Pancreas (tissue), 10 donors: ENCODE measurements at regions of chr12 and their contacts with region 1.

Region 1: GRCh38 chr12:5442251-5443006 is 10.5 kb downstream of the NTF3 start:
- DNase-seq: peak in 2 of 6 donors; percentile 13 to 18
- ATAC-seq: peak; percentile 58 to 86 (median 80)
- H3K4me3 ChIP-seq: no peak overlapping the region
- H3K27ac ChIP-seq: no peak overlapping the region
- H3K4me1 ChIP-seq: no peaks in the 10 kb centered on the region
- H3K27me3 ChIP-seq: no peaks in the 10 kb centered on the region
- CTCF ChIP-seq: peak in 1 of 4 donors; percentile 33

Region 2: DNA sequence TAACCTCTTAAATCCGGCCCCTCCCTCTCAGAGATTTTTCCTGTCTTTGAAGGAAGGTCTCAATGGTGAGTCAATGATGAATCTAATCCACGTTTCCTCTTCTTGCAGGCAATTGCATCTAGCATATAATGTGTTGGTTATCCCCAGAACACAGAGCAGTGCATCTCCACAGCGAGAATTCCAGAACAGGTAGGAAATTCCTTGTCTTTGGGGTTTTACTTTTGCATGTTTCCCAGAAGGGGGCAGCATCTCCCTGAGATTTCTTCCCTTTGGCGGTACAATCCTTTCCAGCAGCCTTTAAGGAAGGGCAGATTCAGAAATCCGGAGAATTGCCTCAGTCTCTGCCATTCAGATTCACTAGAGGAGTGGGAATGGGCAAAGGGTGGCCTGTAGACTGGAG is 270.7 kb before region 1 on chr12:
- intact Hi-C with region 1: loop called in 1 of 3 experiments (anchors 10 kb)
- DNase-seq: peak in 2 of 6 donors; percentile 6 to 22
- ATAC-seq: peak in 3 of 4 donors; percentile 38 to 61 (median 54)
- H3K4me3 ChIP-seq: no peak overlapping the region
- H3K27ac ChIP-seq: no peak overlapping the region
- H3K4me1 ChIP-seq: no peaks in the 10 kb centered on the region
- H3K27me3 ChIP-seq: peaks cover 0 to 14% (median 0%) of the 10 kb centered on the region in 4 donors
- CTCF ChIP-seq: peak in 2 of 4 donors; percentile 6 to 37

Region 3: DNA sequence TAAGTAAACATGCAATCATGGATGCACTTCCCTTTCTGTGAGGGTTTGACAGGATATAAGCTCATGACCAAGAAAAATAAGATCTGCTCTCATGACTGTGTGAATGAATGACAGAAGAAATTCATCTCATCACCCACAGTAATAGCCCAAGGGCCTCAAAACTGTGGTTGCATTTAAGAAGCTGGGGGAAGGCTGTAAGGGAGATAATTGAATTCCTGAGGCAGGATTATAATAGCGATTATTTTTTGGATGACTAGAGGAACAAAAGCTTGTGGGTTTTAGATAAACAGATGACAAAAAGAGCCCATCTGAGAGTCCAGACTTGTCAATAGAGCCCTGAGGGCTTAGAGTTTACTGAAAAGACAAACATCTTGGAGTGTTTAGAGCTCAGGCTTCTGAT is 150.7 kb after region 1 on chr12:
- intact Hi-C with region 1: no loop called
- DNase-seq: no peak
- ATAC-seq: no peak
- H3K4me3 ChIP-seq: no peak overlapping the region
- H3K27ac ChIP-seq: no peak overlapping the region
- H3K4me1 ChIP-seq: no peaks in the 10 kb centered on the region
- H3K27me3 ChIP-seq: no peaks in the 10 kb centered on the region
- CTCF ChIP-seq: no peak